ENCODE measurements at regions of chr4 and their contacts with region 1.

Region 1: GRCh38 chr4:69167300-69167699 is 47.2 kb downstream of the UGT2B11 start:
- DNase-seq: no peak
- ATAC-seq: no peak
- H3K4me3 ChIP-seq: no peak overlapping the region
- H3K4me3 Mint-ChIP-seq: no peak overlapping the region
- H3K27ac ChIP-seq: no peak overlapping the region
- H3K27ac Mint-ChIP-seq: no peak overlapping the region
- H3K4me1 ChIP-seq: no peaks in the 10 kb centered on the region
- H3K4me1 Mint-ChIP-seq: no peaks in the 10 kb centered on the region
- H3K27me3 ChIP-seq: no peaks in the 10 kb centered on the region
- H3K27me3 Mint-ChIP-seq: peaks cover 0 to 6% (median 0%) of the 10 kb centered on the region in 5 donors

Region 2: GRCh38 chr4:68271851-68272756 is 895.2 kb before region 1 on chr4:
- CTCF ChIA-PET with region 1: no interaction called
- POLR2A ChIA-PET with region 1: no interaction called
- intact Hi-C with region 1: loop called in 1 of 2 experiments (anchors 2 kb)
- DNase-seq: peak in 6 of 9 donors; percentile 11 to 53 (median 40)
- ATAC-seq: peak; percentile 75
- H3K4me3 ChIP-seq: no peak overlapping the region
- H3K4me3 Mint-ChIP-seq: peak overlapping the region in 9 of 10 donors; percentile 18 to 57 (median 43)
- H3K27ac ChIP-seq: no peak overlapping the region
- H3K27ac Mint-ChIP-seq: no peak overlapping the region
- H3K4me1 ChIP-seq: no peaks in the 10 kb centered on the region
- H3K4me1 Mint-ChIP-seq: peaks cover 0 to 12% (median 0%) of the 10 kb centered on the region in 7 donors
- H3K27me3 ChIP-seq: no peaks in the 10 kb centered on the region
- H3K27me3 Mint-ChIP-seq: peaks cover 0 to 16% (median 12%) of the 10 kb centered on the region in 5 donors

Region 3: DNA sequence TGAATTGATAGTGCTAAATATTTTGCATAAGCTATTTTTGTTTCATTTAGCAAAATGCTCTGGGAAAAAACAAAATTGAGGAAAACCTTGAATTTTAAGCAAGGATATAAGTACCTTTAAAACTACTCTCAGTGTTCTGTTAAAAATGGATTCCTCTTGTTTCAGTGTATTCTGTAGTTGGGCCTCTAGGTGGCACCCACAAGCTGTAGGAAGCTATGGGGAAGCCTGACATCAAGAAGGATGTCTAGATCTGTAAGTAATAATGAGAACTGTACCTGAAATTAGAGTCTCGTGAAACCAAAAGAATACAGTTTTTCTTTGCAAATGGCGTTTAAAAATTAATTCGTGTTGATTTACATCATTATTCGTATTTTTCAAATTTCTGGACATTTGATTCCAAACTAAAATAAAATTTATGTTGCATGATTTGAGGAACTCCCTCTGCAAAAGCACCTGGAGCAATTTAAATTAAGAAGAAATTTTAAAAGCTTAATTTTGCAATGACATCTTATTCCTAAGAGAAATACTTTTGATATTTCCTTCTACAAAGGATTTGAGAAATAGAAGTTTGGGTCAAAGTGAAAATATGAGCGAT is 668.8 kb before region 1 on chr4:
- CTCF ChIA-PET with region 1: no interaction called
- POLR2A ChIA-PET with region 1: no interaction called
- intact Hi-C with region 1: loop called in 1 of 2 experiments (anchors 1 kb)
- DNase-seq: peak in 8 of 9 donors; percentile 28 to 67 (median 46)
- ATAC-seq: peak; percentile 94
- H3K4me3 ChIP-seq: no peak overlapping the region
- H3K4me3 Mint-ChIP-seq: no peak overlapping the region
- H3K27ac ChIP-seq: no peak overlapping the region
- H3K27ac Mint-ChIP-seq: no peak overlapping the region
- H3K4me1 ChIP-seq: no peaks in the 10 kb centered on the region
- H3K4me1 Mint-ChIP-seq: peaks cover 4 to 22% (median 11%) of the 10 kb centered on the region in 7 donors
- H3K27me3 ChIP-seq: no peaks in the 10 kb centered on the region
- H3K27me3 Mint-ChIP-seq: peaks cover 0 to 4% (median 0%) of the 10 kb centered on the region in 5 donors

Region 4: GRCh38 chr4:69640289-69640688 is 473.0 kb after region 1 on chr4:
- CTCF ChIA-PET with region 1: no interaction called
- POLR2A ChIA-PET with region 1: no interaction called
- intact Hi-C with region 1: no loop called
- DNase-seq: no peak
- ATAC-seq: no peak
- H3K4me3 ChIP-seq: no peak overlapping the region
- H3K4me3 Mint-ChIP-seq: no peak overlapping the region
- H3K27ac ChIP-seq: no peak overlapping the region
- H3K27ac Mint-ChIP-seq: no peak overlapping the region
- H3K4me1 ChIP-seq: no peaks in the 10 kb centered on the region
- H3K4me1 Mint-ChIP-seq: no peaks in the 10 kb centered on the region
- H3K27me3 ChIP-seq: no peaks in the 10 kb centered on the region
- H3K27me3 Mint-ChIP-seq: no peaks in the 10 kb centered on the region